Posterior vena cava (tissue), 2 donors: ENCODE measurements at regions of chr9 and their contacts with region 1.

Region 1: DNA sequence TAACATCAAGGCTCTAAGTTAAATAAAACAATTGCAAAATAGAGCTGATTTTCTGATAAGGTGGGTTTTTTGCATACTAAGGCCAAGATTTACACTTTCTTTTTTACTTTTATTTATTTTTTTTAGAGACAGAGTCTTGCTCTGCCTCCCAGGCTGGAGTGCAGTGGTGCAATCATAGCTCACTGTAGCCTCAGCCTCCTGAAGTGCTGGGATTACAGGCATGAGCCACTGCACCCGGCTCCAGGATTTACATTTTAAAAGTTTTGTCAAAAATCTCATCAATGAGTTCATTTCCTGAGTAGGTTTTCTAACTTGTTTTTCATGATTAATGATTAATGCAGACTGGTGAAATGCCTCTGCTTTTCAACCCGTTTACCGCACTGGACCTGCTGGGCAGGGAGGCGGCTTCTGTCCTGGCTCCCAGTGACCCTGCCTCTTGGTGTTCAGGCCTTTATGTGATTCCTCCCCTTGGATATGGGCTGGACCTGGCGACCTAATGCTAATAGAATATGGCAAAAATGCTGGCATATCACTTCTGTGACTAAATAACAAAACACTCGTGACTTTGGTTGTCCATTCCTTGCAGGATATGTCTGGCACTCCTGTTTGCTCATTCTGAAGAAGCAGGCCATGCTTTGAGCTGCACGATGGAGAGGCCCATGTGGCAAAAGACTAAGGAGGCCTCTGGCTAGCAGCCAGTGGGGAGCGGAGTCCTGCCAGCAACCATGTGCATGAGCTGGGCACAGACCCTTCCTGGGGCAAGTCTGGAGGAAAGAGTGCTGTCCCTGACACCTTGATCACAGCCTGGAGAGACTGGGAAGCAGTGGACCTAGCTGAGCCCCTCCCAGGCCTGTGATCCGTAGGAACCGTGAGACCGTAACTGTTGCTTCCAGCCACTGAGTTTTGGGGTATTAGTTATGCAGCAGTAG is 72.2 kb upstream of the PTCH1 start:
- DNase-seq: peak; percentile 40

Region 2: GRCh38 chr9:95250462-95251221 is 338.3 kb before region 1 on chr9:
- intact Hi-C with region 1: no loop called
- DNase-seq: no peak

Region 3: DNA sequence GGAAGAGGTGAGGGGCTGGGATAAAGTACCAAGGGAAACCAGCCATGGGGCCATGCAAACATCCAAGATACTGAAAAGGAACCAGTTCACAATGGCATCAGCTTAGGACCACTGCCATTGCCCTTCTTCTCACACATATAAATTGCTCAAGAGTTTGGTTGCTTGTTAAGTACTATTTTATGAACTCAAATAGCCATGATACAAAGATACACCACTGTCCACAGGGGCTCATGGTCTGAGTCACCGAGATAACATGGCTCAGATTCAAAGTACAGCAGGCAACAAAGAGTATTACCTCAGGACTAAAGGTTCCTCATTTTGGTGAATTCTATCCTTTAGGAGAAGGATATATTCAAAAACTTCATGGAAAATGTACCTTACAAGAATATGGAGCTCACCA is 327.1 kb before region 1 on chr9:
- intact Hi-C with region 1: no loop called
- DNase-seq: no peak

Region 4: DNA sequence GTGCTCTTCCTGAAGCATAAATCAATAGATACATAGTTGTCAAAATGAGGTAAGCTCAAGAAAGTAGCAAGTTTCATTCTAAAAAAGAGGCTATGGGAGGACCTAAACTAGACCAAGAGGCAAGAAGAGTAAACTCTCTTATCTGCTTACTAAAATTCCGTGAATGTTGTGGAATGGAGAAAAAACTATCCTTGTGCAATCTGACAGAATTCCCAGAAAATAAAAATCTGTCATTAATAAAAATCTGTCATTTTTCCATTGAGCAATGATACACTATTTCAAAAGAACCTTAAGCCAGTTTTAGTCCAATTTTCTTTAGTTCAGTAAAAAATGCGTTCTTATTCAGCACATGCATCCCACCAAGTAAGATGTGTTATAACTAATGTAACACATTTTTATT is 255.6 kb before region 1 on chr9:
- intact Hi-C with region 1: no loop called
- DNase-seq: no peak

Region 5: GRCh38 chr9:95552814-95553546 is 36.0 kb before region 1 on chr9:
- intact Hi-C with region 1: loop called in 1 of 2 experiments (anchors 1 kb)
- DNase-seq: no peak

Region 6: DNA sequence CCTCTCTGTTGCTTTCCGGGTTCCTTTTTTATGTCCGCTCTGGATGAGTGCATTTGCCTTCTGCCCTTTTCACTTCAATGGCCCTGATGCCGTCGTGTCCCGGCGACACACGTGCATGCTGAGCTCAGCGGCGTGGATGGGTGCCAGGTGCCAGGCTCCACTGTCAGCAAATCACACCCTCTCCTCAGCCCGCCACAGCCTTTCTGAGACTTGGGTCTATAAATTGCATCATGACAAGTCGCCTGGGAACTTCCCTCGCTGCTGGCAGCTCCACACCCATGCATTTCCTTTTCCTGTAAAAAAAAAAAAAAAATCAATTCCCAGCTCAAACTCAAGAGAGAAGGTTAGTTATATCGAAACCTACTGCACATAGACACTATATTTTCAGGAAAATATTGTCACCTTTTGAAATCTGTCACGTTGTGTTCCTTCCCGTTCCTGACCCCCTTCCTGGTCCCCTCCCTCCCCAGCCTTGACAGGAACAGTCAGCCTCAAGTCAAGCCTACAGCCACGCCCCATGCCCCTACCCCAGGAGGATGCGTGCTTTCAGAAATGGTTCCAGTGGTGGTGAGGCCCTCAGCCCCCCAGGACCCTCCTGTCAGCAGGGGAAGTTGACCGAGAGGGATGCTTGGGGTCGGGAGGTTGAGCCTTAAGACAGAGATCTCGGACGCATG is 38.0 kb after region 1 on chr9:
- intact Hi-C with region 1: loop called in 1 of 2 experiments (anchors 1 kb)
- DNase-seq: peak; percentile 90